PC-9 (cell line): ENCODE measurements at regions of chr7 and their contacts with region 1.

Region 1: DNA sequence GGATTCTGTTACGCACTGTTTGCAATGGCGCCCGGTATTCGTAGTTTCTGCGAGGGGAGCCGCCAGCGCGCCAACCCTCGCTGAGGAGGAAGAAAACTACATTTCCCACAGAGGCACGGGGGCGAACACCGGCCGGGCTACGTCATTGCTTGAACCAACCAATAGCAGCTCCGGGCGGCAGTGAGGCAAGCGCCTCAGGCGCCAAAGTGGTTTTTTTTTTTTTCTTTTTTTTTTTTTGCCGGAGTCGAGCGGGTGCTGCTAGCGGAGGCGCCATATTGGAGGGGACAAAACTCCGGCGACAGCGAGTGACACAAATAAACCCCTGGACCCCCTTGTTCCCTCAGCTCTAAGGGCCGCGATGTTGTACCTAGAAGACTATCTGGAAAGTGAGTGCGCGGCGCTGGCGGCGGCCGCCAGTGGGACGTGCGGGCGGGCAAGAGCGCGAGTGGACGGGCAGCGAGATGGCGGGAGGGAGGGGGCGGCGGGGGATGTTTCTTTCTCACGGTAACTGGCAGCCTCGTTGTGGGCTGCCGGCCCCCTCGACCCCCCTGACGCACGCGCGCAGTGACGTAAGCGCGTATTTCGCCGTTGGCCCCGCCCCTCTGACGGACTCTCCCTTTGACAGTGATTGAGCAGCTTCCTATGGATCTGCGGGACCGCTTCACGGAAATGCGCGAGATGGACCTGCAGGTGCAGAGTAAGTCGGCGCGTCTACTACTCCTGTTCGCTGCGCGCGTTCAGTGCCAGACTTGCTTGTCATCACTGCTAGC is at the start of gene ING3:
- DNase-seq: peak; percentile 95 to 99
- H3K4me3 ChIP-seq: peak within 1 kb of the TSS; percentile 83
- H3K27ac ChIP-seq: peak within 1 kb of the TSS; percentile 93
- H3K4me1 ChIP-seq: peaks cover 24% of the 10 kb centered on the region
- H3K27me3 ChIP-seq: no peaks in the 10 kb centered on the region
- CTCF ChIP-seq: no peak
- total RNA-seq, gene ING3: 10.9 and 16.4 TPM in 2 replicates

Region 2: DNA sequence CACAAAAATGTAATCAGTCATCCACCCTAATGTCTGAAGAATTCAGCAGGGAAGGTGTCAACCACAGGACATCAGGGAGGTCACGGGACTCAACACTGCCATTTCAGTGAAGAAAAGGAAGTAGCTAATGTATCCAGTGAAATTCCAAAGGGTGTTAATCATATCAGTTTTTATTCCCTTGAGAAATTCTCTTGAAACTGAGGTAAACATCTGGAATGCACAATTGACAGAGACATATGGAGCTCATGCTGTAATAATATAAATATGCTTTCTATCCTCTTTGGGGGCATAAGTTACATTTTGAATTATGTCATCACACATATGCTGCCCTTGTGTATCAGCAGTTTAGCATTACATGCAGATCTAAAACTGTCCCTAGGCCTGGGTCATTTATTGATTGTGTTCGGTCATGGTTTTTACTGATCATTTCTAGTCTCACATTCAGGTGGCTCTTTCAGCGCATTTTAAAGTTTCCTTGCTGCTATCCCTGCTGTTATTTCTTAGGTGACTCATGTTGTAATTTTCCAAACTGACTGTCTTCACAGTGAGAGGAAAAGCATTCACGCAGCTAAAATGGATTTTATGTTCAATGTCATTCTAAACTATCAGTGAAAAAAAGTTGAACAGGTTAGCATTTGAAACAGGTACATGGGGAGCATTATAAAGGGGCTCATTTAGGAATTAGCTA is 366.7 kb before region 1 on chr7:
- CTCF ChIA-PET with region 1: no interaction called
- POLR2A ChIA-PET with region 1: no interaction called
- intact Hi-C with region 1: loop called (anchors 10 kb)
- DNase-seq: peak; percentile 65 to 69
- H3K4me3 ChIP-seq: no peak overlapping the region
- H3K27ac ChIP-seq: no peak overlapping the region
- H3K4me1 ChIP-seq: peaks cover 12% of the 10 kb centered on the region
- H3K27me3 ChIP-seq: no peaks in the 10 kb centered on the region
- CTCF ChIP-seq: no peak

Region 3: GRCh38 chr7:120725376-120726039 is 225.2 kb before region 1 on chr7:
- CTCF ChIA-PET with region 1: no interaction called
- POLR2A ChIA-PET with region 1: interaction called, 13 read pairs
- intact Hi-C with region 1: no loop called
- DNase-seq: no peak
- H3K4me3 ChIP-seq: no peak overlapping the region
- H3K27ac ChIP-seq: no peak overlapping the region
- H3K4me1 ChIP-seq: no peaks in the 10 kb centered on the region
- H3K27me3 ChIP-seq: no peaks in the 10 kb centered on the region
- CTCF ChIP-seq: peak; percentile 80

Region 4: DNA sequence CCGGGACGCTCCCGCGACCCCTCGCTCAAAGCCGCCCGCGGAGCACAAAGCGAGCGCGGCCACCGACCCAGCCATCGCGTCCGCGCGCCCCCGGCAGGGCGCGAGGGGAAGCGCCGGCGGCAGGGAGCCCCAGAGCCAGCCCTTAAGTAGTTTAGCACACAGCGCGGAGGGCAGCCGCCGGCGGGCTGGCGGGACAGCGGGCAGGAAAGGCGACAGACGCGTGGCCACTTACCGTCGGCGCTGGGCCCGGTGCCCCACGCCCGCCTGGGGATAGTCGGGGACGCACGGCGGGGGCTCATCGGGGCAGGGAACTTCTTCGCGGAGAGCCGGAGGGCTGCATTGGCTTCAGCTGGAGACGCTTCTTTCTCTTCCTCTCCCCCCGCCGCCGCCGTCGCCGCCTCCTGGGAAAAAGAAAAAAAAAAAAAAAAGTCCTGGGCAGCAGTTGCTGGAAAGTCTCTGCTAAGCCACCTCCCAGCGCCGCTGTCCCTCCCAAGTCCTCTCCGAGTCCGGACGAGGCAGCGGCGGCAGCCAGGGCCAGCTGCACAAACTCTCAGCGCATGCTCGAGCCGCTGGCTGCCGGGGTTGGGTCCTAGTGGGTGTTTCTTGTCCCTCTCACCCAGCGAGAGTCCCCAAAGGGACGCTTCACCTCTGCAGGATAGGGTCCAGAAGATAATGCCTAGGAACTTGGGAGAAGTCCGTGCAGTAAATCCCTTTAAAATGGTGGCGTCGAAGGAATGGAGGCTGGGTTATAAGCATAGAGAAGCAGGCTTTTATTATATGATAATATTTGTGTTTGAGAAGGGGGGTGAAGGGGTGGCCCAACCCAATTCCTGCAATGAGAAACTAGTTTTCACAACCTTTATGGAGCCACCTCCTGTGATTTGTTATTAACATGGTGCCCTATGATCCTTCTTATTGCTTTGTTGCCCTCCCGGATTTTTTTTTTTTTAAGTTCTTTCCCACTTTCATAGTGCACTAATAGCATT is 92.8 kb before region 1 on chr7 and contains the start of gene TSPAN12:
- CTCF ChIA-PET with region 1: no interaction called
- POLR2A ChIA-PET with region 1: no interaction called
- intact Hi-C with region 1: loop called (anchors 1 kb)
- DNase-seq: peak; percentile 64 to 90
- H3K4me3 ChIP-seq: peak within 1 kb of the TSS; percentile 90
- H3K27ac ChIP-seq: peak within 1 kb of the TSS; percentile 45
- H3K4me1 ChIP-seq: peaks cover 14% of the 10 kb centered on the region
- H3K27me3 ChIP-seq: no peaks in the 10 kb centered on the region
- CTCF ChIP-seq: peak; percentile 64
- total RNA-seq, gene TSPAN12: 5.8 and 6.1 TPM in 2 replicates

Region 5: GRCh38 chr7:120987683-120988590 is 37.2 kb after region 1 on chr7:
- CTCF ChIA-PET with region 1: interaction called, 6 read pairs
- POLR2A ChIA-PET with region 1: no interaction called
- intact Hi-C with region 1: loop called (anchors 2 kb)
- DNase-seq: peak; percentile 74 to 85
- H3K4me3 ChIP-seq: peak overlapping the region; percentile 74
- H3K27ac ChIP-seq: no peak overlapping the region
- H3K4me1 ChIP-seq: peaks cover 10% of the 10 kb centered on the region
- H3K27me3 ChIP-seq: no peaks in the 10 kb centered on the region
- CTCF ChIP-seq: peak; percentile 95

Region 6: GRCh38 chr7:121069346-121070100 is 118.8 kb after region 1 on chr7:
- CTCF ChIA-PET with region 1: no interaction called
- POLR2A ChIA-PET with region 1: interaction called, 10 read pairs
- intact Hi-C with region 1: no loop called
- DNase-seq: no peak
- H3K4me3 ChIP-seq: no peak overlapping the region
- H3K27ac ChIP-seq: no peak overlapping the region
- H3K4me1 ChIP-seq: no peaks in the 10 kb centered on the region
- H3K27me3 ChIP-seq: no peaks in the 10 kb centered on the region
- CTCF ChIP-seq: no peak